Upper lobe of right lung (tissue), 1 donor: ENCODE measurements at regions of chr4 and their contacts with region 1.

Region 1: GRCh38 chr4:68271851-68272756 is 26.6 kb upstream of the TMPRSS11B start:
- DNase-seq: no peak
- ATAC-seq: peak; percentile 84
- H3K4me3 ChIP-seq: no peak overlapping the region
- H3K27ac ChIP-seq: no peak overlapping the region
- H3K4me1 ChIP-seq: no peaks in the 10 kb centered on the region
- H3K27me3 ChIP-seq: peaks cover 5% of the 10 kb centered on the region
- CTCF ChIP-seq: peak; percentile 82

Region 2: GRCh38 chr4:68375667-68376559 is 103.8 kb after region 1 on chr4:
- intact Hi-C with region 1: loop called (anchors 10 kb)
- DNase-seq: peak; percentile 66
- ATAC-seq: peak; percentile 92
- H3K4me3 ChIP-seq: peak overlapping the region; percentile 11
- H3K27ac ChIP-seq: no peak overlapping the region
- H3K4me1 ChIP-seq: peaks cover 4% of the 10 kb centered on the region
- H3K27me3 ChIP-seq: peaks cover 6% of the 10 kb centered on the region
- CTCF ChIP-seq: peak; percentile 82

Region 3: DNA sequence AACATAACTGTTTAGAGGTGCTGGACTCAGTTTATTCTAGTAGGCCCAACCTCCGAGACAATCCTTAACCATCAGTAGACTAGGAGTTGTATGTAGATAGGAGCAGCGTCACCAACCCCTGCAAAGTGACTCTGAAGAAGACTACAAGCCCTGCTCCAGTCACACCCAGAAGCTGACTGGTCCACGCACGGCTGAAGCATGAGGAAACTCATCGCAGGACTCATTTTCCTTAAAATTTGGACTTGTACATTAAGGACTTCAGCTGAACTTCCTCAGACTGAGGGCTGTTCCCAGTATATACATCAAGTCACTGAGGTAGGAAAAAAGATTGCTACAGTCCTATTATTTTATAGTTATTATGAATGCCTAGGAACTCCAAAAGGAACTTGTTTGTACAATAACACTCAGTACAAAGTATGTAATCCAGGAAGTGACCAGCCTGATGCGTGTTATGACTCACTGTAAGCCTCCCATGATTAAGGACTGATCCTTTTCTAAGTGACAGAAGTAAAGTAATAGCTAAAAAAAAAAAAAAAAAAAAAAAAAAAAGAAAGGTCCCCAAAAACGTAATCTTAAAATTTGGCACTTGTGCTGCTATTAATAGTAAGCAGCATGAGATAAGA is 782.6 kb after region 1 on chr4:
- intact Hi-C with region 1: no loop called
- DNase-seq: no peak
- ATAC-seq: peak; percentile 68
- H3K4me3 ChIP-seq: no peak overlapping the region
- H3K27ac ChIP-seq: peak overlapping the region; percentile 47
- H3K4me1 ChIP-seq: no peaks in the 10 kb centered on the region
- H3K27me3 ChIP-seq: no peaks in the 10 kb centered on the region
- CTCF ChIP-seq: no peak